ENCODE measurements at regions of chr9 and their contacts with region 1.

Region 1: GRCh38 chr9:107239474-107239873 is 43.6 kb upstream of the RAD23B start:
- DNase-seq: no peak
- ATAC-seq: no peak

Region 2: DNA sequence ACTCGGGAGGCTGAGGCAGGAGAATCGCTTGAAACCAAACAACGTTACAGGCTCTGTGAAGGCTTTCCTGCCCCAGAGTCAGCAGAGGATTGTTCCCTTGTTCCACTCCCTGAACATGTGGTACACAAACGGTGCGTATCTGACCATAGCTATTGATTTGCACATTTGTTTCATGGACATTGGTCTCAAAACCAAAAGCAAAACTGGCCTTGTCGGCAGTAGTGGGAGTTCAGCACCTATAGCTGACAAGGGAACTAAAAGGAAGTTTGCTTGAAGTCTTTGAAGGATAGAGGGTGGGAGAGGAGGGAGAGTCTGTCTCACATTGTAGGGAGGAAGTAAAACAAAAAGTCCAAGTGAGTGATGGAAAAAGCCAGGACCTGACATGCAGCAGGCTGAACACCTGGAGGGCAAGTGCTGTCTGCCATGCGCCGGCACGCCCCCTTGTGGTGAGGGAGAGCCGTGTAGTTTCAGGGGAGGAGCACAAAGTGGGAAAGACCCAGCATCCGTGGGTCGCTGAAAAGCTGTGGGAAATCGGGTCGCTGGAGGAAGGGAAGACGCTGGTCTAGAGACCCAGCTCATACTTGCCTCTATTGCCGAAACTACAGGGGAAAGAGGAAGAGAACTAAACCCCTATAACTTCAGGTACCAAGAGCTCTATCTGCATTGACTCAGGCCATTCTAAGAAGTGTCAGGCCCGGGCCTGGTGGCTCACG is 101.6 kb after region 1 on chr9:
- intact Hi-C with region 1: loop called (anchors 5 kb)
- DNase-seq: peak; percentile 90
- ATAC-seq: no peak